ENCODE measurements at regions of chr2 and their contacts with region 1.

Region 1: GRCh38 chr2:10057231-10058107 is 14.1 kb downstream of the KLF11 start:
- DNase-seq: no peak
- ATAC-seq: peak; percentile 73

Region 2: DNA sequence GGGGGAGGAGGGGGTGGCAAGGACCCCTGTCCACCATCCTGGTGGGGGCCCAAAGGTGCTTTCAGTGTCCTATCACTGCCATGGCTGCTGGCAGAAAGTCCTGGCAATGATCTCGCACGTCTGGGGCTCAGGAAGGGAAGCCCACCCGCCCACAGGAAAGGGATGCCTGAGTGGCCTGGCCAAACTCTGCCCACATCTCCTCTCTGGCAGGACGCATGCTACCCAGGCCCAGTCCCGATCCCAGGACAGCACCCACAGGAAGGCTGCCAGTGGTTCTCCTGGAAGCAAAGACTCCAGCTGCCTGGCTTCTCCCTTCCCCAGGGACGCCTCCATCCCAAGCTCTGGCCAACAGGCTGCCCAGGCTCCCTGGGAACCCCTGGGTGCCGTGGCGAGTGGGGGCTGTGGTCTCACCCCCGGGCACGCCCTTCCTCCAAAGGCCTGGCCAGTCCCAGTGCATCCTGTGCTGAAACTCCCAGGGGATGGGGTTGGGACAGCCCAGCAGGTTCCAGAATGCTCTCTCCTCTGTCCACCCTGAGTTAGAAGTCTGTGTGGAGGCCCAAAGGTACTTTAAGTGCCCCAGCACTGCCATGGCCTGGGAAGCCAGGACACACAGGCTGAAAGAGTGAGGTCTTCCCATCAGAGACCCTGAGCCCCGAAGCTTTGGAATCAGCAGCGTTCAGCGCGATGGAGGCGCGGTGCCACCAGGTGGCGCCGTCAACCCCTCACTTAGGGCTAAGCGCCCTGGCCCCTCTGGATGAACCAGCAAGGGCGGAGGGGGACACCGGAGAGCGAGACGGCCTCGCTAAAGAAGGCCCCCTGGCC is 243.9 kb before region 1 on chr2:
- intact Hi-C with region 1: loop called (anchors 10 kb)
- DNase-seq: peak; percentile 86
- ATAC-seq: peak; percentile 90

Region 3: GRCh38 chr2:9984217-9984739 is 73.2 kb before region 1 on chr2:
- intact Hi-C with region 1: loop called (anchors 10 kb)
- DNase-seq: no peak
- ATAC-seq: peak; percentile 62